HEK293 (cell line): ENCODE measurements at regions of chrX and their contacts with region 1.

Region 1: GRCh38 chrX:74421036-74421739 is at the start of gene SLC16A2:
- H3K4me3 ChIP-seq: peak within 1 kb of the TSS; percentile 47
- H3K27ac ChIP-seq: peak within 1 kb of the TSS; percentile 90
- H3K4me1 ChIP-seq: peaks cover 7% of the 10 kb centered on the region
- CTCF ChIP-seq: peak; percentile 54; the same call in 1 of the 2 replicates

Region 2: GRCh38 chrX:74291964-74292807 is 129.0 kb before region 1 on chrX:
- CTCF ChIA-PET with region 1: no interaction called
- POLR2A ChIA-PET with region 1: interaction called, 10 read pairs
- H3K4me3 ChIP-seq: peak overlapping the region; percentile 56
- H3K27ac ChIP-seq: peak overlapping the region; percentile 95
- H3K4me1 ChIP-seq: 0 out of 2 replicates have a peak, but pooled peaks cover 3% of the 10 kb centered on the region
- CTCF ChIP-seq: peak; percentile 48; the same call in 1 of the 2 replicates